Naive thymus-derived CD4-positive, alpha-beta T cell (primary cell): ENCODE measurements at regions of chr5 and their contacts with region 1.

Region 1: GRCh38 chr5:81288021-81288433 is 13.4 kb upstream of the ZCCHC9 start:
- DNase-seq: no peak
- ATAC-seq: no peak
- H3K4me3 ChIP-seq: no peak overlapping the region
- H3K4me3 Mint-ChIP-seq: no peak overlapping the region
- H3K27ac ChIP-seq: no peak overlapping the region
- H3K27ac Mint-ChIP-seq: no peak overlapping the region
- H3K4me1 ChIP-seq: peaks cover 6 to 7% of the 10 kb centered on the region in 2 donors
- H3K4me1 Mint-ChIP-seq: peaks cover 14 to 56% (median 43%) of the 10 kb centered on the region in 7 donors
- H3K27me3 ChIP-seq: no peaks in the 10 kb centered on the region
- H3K27me3 Mint-ChIP-seq: no peaks in the 10 kb centered on the region

Region 2: DNA sequence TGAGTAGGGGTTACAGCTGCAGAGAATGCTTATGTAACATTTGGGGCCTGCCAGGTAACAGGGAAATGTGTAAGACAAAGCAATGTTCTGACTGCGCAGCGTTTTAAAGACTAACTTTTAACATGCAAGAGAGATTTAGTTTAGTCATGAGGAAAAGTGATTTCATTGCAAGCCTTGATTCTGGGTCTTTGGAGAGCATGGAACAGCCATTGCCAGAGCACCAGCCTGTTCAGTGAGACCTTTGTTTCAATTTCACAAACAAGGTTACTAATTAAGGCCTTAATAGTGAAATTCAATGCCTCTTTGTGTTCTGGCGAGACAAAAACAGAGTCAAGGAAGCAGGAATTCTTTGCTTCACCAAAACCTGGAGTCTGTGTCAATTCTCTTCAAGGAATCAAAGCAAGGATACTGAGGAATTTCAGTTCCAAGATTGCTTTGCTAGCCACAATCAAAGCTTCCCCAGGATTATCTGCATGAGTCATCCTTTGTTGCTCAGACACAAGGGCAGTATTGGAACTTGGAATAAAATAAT is 40.5 kb before region 1 on chr5:
- CTCF ChIA-PET with region 1: no interaction called
- POLR2A ChIA-PET with region 1: no interaction called
- intact Hi-C with region 1: loop called in 1 of 2 experiments (anchors 10 kb)
- DNase-seq: no peak
- ATAC-seq: no peak
- H3K4me3 ChIP-seq: no peak overlapping the region
- H3K4me3 Mint-ChIP-seq: no peak overlapping the region
- H3K27ac ChIP-seq: no peak overlapping the region
- H3K27ac Mint-ChIP-seq: peak overlapping the region in 2 of 9 donors; percentile 4 to 38
- H3K4me1 ChIP-seq: no peaks in the 10 kb centered on the region
- H3K4me1 Mint-ChIP-seq: peaks cover 0 to 6% (median 0%) of the 10 kb centered on the region in 7 donors
- H3K27me3 ChIP-seq: no peaks in the 10 kb centered on the region
- H3K27me3 Mint-ChIP-seq: no peaks in the 10 kb centered on the region